AG04450 (cell line): ENCODE measurements at regions of chr16 and their contacts with region 1.

Region 1: DNA sequence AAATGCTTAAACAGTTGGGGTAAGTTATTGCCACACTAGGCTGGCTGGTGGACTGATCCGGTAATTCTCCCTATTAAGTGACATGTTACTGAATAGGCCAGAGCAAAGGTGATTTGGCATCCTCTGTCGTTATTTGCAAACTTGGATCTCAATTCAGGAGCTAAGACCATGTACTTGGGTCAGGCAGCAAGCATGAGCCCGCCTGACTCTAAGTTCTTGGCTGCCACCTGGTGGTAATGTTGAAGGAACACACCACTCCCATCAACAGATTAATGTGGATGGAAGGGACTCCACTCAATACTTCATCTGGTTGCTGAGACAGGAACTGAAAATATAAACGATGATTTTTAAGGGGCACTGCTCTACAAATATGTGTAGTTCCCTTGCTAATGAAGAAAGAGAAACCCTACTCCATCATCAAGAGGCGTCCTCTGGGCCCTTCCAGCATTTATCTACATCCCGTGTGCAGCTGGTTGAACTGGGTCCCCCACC is 70.8 kb downstream of the EMP2 start:
- DNase-seq: peak; percentile 65
- H3K4me3 ChIP-seq: no peak overlapping the region
- H3K27ac ChIP-seq: no peak overlapping the region
- H3K27me3 ChIP-seq: no peaks in the 10 kb centered on the region
- CTCF ChIP-seq: peak; percentile 83

Region 2: DNA sequence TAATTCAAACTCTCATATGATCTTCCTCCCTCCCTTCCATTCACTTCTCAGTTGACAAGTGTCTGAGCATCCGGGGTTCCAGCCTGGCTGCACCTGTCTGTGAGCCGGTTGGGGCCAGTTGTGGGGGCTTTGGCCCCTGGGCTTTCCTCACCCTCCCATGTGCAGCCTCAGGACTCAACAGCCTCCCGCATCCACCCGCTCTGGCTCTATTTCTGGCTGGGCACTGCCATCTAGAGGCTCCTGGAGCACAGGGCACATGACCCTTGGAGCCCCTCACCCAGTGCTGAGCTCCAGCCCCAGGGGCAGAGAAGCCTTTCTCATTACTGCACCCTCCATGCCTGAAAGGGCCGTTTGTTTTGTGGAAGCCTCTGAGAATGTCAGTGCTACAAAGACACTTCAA is 1374.8 kb before region 1 on chr16:
- CTCF ChIA-PET with region 1: interaction called, 17 read pairs
- POLR2A ChIA-PET with region 1: no interaction called
- DNase-seq: no peak
- H3K4me3 ChIP-seq: no peak overlapping the region
- H3K27ac ChIP-seq: no peak overlapping the region
- H3K27me3 ChIP-seq: no peaks in the 10 kb centered on the region
- CTCF ChIP-seq: peak; percentile 63

Region 3: GRCh38 chr16:10521681-10522274 is 12.2 kb after region 1 on chr16:
- CTCF ChIA-PET with region 1: interaction called, 15 read pairs
- POLR2A ChIA-PET with region 1: no interaction called
- DNase-seq: peak; percentile 6
- H3K4me3 ChIP-seq: no peak overlapping the region
- H3K27ac ChIP-seq: no peak overlapping the region
- H3K27me3 ChIP-seq: no peaks in the 10 kb centered on the region
- CTCF ChIP-seq: peak; percentile 80

Region 4: DNA sequence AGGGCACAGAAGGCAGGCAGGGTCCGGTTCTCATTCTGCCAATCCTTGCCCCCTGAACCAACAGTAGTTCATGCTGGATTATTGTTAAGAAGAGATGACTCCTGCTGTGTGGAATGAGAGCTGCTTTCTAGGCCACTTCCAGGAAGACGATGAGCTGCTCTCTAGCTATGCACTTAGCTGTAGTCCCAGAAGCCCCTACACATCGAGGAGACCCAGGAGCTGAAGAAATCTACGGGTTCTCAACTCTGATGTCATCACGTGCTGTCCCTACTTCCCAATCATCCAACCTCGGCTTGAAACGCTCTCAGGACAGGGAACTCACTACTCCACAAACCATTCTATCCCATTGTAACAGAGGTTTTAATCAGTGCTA is 99.8 kb after region 1 on chr16:
- CTCF ChIA-PET with region 1: interaction called, 12 read pairs
- POLR2A ChIA-PET with region 1: no interaction called
- DNase-seq: peak; percentile 72
- H3K4me3 ChIP-seq: no peak overlapping the region
- H3K27ac ChIP-seq: peak overlapping the region; percentile 47
- H3K27me3 ChIP-seq: no peaks in the 10 kb centered on the region
- CTCF ChIP-seq: 0 out of 2 replicates have a peak, but pooled peaks have one; percentile 6

Region 5: DNA sequence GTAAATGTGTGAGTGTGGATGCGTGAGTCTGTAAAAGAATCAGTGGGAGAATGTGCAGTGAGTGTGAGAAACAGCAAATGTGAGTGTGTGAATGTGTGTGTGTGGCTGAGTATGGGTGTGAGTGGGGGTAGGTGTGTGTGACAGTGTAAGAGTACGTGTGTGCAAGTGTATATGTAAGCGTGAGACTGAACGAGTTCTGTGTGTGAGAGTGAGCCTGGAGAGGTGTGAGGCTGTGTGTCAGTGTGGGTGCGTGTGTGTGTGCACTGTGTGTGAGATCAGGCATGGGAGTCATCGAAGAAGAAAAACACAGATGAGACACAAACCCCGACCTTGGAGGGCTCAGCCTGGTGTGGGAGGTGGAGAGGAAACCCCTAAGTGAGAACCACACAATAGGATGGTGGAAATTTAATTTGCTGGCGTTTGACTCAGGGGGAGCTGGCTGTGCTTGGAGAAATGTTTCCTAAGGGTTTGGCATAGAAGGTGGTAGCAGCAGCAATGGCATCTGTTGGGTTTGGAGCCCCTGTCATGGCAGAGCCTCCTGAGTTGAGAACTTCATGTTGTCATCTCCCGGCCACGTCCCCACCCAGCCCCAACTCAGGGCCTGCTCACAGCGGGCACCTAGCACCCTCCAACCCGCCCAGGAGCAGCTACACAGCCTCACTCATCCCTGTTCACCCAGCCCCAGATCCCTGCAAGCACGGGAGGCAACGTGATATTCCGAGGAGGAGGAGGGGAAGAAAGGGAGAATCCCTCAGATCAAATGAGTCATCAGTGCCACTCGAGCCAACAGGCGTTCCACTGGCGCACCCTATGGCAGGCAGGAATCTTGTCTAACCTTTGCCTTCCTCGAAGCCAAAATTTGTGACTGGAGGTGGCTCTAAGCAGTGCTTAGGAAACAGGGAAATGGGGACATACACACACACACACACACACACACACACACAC is 219.8 kb after region 1 on chr16:
- CTCF ChIA-PET with region 1: interaction called, 204 read pairs
- POLR2A ChIA-PET with region 1: no interaction called
- DNase-seq: no peak
- H3K4me3 ChIP-seq: no peak overlapping the region
- H3K27ac ChIP-seq: no peak overlapping the region
- H3K27me3 ChIP-seq: no peaks in the 10 kb centered on the region
- CTCF ChIP-seq: no peak

Region 6: GRCh38 chr16:10737068-10737625 is 227.6 kb after region 1 on chr16:
- CTCF ChIA-PET with region 1: interaction called, 204 read pairs
- POLR2A ChIA-PET with region 1: no interaction called
- DNase-seq: peak; percentile 38
- H3K4me3 ChIP-seq: no peak overlapping the region
- H3K27ac ChIP-seq: no peak overlapping the region
- H3K27me3 ChIP-seq: no peaks in the 10 kb centered on the region
- CTCF ChIP-seq: peak; percentile 95

Region 7: DNA sequence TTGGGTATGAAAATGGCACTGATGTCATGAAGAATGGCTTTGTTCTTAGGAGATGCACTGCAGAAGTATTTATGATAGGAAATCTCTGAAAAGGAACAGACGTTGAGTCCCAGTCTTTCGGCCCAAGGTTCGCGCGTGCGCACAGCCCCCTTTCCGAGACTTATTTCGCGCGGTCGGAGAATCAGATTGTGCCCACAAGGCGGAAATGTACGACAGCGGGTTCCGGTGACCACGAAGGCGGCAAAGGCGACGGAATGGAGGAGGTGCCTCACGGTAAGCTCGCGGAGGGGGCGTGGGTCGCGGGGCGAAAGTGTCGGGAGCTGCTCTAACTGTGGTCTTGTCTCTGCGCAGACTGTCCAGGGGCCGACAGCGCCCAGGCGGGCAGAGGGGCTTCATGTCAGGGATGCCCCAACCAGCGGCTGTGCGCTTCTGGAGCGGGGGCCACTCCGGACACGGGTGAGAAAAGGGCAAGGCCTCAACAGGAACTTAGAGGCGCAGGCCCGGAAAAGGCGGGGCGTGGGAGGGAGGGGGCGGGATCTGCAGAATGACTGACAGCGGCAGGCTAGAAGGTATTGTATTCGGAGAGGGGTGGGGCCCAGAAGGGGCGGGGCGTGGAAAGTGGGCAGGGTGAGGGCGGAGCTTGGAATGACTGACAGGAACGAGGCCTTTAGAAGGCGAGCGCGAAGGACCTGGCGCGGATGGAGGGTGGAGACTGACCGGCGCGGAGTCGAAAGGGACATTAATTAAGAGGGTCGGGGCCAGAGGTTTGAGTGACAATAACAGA is 234.2 kb after region 1 on chr16 and contains the start of gene NUBP1:
- CTCF ChIA-PET with region 1: interaction called, 204 read pairs
- POLR2A ChIA-PET with region 1: no interaction called
- DNase-seq: peak; percentile 94
- H3K4me3 ChIP-seq: peak within 1 kb of the TSS; percentile 79
- H3K27ac ChIP-seq: peak within 1 kb of the TSS; percentile 98
- H3K27me3 ChIP-seq: no peaks in the 10 kb centered on the region
- CTCF ChIP-seq: no peak
- polyA plus RNA-seq, gene NUBP1: 23.0 and 23.6 TPM in 2 replicates